Activated CD8-positive, alpha-beta memory T cell treated with anti-CD3 and anti-CD28 coated beads, Interleukin-2, amount 10 ng/mL, durations not matched to agents 7 days and 5 days (primary cell): ENCODE measurements at regions of chr7 and their contacts with region 1.

Region 1: GRCh38 chr7:139494835-139495579 is 11.5 kb upstream of the KLRG2 start:
- DNase-seq: peak; percentile 70
- ATAC-seq: peak; percentile 85
- H3K4me3 Mint-ChIP-seq: no peak overlapping the region
- H3K27ac Mint-ChIP-seq: peak overlapping the region; percentile 64
- H3K4me1 Mint-ChIP-seq: peaks cover 28% of the 10 kb centered on the region
- H3K27me3 Mint-ChIP-seq: peaks cover 16% of the 10 kb centered on the region

Region 2: DNA sequence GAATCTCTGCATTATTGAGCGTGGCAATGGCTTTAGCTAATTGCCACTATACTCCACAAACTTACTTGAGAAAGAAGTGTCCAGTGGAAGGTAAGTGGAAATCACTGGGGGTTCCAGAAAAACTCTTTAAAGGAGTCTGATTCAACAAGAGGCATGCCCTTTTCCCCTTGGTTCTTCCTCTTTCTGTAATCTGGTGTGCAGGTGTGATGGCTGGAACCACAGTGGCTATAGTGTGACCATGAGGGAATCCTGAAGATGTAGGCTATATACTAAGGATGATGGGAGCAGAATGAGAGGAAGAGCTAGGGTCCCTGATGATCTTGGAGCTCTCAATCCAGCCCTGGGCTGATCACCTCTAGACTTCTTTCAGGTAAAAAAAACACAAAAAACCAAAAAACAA is 26.4 kb after region 1 on chr7:
- CTCF ChIA-PET with region 1: no interaction called
- DNase-seq: no peak
- ATAC-seq: no peak
- H3K4me3 Mint-ChIP-seq: no peak overlapping the region
- H3K27ac Mint-ChIP-seq: no peak overlapping the region
- H3K4me1 Mint-ChIP-seq: peaks cover 7% of the 10 kb centered on the region
- H3K27me3 Mint-ChIP-seq: peaks cover 47% of the 10 kb centered on the region

Region 3: GRCh38 chr7:140003913-140004382 is 508.9 kb after region 1 on chr7:
- CTCF ChIA-PET with region 1: interaction called, 12 read pairs
- DNase-seq: peak; percentile 53
- ATAC-seq: no peak
- H3K4me3 Mint-ChIP-seq: no peak overlapping the region
- H3K27ac Mint-ChIP-seq: no peak overlapping the region
- H3K4me1 Mint-ChIP-seq: peaks cover 3% of the 10 kb centered on the region
- H3K27me3 Mint-ChIP-seq: no peaks in the 10 kb centered on the region